Esophagus muscularis mucosa (tissue), 4 donors: ENCODE measurements at regions of chr14 and their contacts with region 1.

Region 1: DNA sequence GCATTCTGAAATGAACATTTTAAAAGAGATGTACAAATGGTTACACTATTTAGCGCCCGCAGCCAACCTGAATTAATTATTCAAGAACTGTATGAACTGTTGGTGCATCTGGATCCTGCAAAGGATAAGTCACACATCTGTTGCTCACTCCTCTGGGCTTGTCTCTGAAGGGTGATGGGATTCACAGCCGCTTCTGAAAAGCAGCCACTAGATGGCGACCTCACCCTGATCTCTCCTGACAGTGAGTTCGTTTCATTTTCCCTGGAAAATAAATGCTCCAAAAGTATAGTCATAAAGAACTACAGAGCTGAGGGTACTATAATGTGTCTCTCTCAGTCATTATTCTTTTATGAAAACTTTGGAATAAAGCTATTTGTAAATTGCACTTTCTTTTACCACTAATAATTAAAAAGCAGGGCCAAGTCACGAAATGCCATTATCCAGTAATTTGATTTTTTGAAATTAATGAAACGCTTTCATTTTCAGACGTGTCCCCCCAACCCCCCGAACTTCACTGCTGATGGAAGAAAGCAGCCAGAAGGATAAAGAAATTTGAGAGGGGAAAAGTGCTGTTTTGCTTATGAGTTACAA is 789.6 kb downstream of the NRXN3 start:
- DNase-seq: no peak
- H3K4me3 ChIP-seq: peak overlapping the region; percentile 8 to 49 (median 32)
- H3K27ac ChIP-seq: peak overlapping the region in 1 of 4 donors; percentile 41
- H3K4me1 ChIP-seq: peaks cover 0 to 8% (median 8%) of the 10 kb centered on the region in 4 donors
- H3K27me3 ChIP-seq: no peaks in the 10 kb centered on the region
- CTCF ChIP-seq: peak; percentile 79 to 89 (median 81)
- EP300 ChIP-seq: no peak
- POLR2A ChIP-seq: no peak

Region 2: DNA sequence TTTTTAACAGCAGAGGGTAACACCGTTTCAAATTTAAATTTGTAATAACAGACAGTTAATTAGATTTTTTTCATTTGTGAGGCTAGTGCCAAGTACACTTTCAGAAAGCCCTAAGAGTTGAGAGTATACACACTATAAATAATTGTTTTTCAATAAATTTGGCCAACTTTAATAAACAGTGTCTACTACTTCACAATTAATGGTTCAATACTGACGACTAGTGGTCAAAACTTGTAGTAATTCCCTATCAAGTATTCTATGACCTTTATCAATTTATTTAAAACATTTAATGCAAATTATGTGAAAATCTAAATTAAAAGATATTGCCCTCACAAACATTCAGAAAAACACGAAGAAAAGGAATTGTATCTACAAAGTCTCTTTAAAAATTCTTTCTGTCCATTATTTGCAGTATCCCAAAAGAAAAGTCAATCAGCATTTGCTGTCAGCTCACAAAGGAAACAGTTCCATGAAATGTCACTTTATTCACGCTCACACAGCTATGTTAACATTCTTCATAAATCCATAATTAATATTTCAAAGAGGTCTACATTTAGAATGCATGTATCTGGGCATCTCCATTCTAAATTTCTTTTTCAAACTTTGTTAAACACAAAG is 1890.5 kb after region 1 on chr14:
- intact Hi-C with region 1: loop called (anchors 10 kb)
- DNase-seq: no peak
- H3K4me3 ChIP-seq: no peak overlapping the region
- H3K27ac ChIP-seq: no peak overlapping the region
- H3K4me1 ChIP-seq: peaks cover 0 to 12% (median 11%) of the 10 kb centered on the region in 4 donors
- H3K27me3 ChIP-seq: no peaks in the 10 kb centered on the region
- CTCF ChIP-seq: peak; percentile 66 to 69 (median 68)
- EP300 ChIP-seq: no peak
- POLR2A ChIP-seq: no peak